GM12878 (cell line): ENCODE measurements at regions of chr2 and their contacts with region 1.

Region 1: DNA sequence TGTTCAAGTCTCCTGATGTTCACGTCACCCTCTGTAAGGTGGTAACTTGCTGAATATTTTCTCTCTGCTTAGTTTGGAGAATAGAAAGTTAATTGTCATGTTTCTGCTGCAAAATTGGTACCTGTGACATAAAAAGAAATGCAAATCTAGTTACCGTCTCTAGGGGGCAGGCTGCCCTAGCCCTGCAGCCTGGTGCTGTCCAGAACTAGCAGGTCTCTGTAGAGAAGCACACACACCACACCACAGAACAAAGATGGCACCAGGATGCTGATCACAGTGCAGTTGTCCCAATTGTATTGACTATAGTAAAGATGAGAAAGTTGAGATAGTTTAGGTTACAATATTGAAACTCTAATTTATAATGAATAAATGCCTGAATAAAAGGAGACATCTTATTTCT is 47.0 kb downstream of the SLC9A4 start:
- DNase-seq: no peak
- ATAC-seq: peak; percentile 88
- H3K4me3 ChIP-seq: no peak overlapping the region
- H3K27ac ChIP-seq: no peak overlapping the region
- H3K4me1 ChIP-seq: no peaks in the 10 kb centered on the region; the same call in 1 of the 2 replicates
- H3K27me3 ChIP-seq: peaks cover 0 to under 1% of the 10 kb centered on the region in 2 experiments; a peak in 1 of 4 replicates
- CTCF ChIP-seq: peak; percentile 68 to 73 (median 72)
- EP300 ChIP-seq: no peak
- POLR2A ChIP-seq: no peak
- RAD21 ChIP-seq: peak; percentile 71

Region 2: GRCh38 chr2:102376052-102376591 is 143.9 kb before region 1 on chr2:
- CTCF ChIA-PET with region 1: no interaction called
- POLR2A ChIA-PET with region 1: no interaction called
- RAD21 ChIA-PET with region 1: no interaction called
- SMC1A ChIA-PET with region 1: no interaction called
- in situ Hi-C with region 1: no loop called
- intact Hi-C with region 1: no loop called
- DNase-seq: no peak
- ATAC-seq: no peak
- H3K4me3 ChIP-seq: no peak overlapping the region
- H3K27ac ChIP-seq: no peak overlapping the region
- H3K4me1 ChIP-seq: no peaks in the 10 kb centered on the region
- H3K27me3 ChIP-seq: no peaks in the 10 kb centered on the region
- CTCF ChIP-seq: no peak
- EP300 ChIP-seq: no peak
- POLR2A ChIP-seq: no peak
- RAD21 ChIP-seq: no peak

Region 3: DNA sequence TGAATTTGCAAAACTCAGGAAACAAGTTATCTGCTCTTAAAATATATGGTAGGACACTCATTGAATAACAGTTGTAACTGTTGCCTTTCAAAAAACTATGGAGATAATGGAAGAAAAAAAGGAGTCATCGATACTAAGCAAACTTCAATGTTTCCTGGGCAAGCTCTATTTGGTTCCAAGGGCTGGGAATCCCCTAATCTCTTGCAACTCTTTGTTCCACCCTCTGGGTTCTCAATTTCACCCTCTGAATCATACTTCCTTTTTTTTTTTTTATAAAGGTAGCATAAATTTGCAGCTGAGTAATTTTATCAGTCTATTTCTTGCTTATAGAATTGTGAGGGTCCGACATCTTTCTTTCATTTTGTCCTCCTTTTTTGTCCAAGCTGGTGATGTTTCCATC is 10.3 kb before region 1 on chr2:
- CTCF ChIA-PET with region 1: interaction called, 11 read pairs
- POLR2A ChIA-PET with region 1: no interaction called
- RAD21 ChIA-PET with region 1: no interaction called
- SMC1A ChIA-PET with region 1: interaction called, 3 read pairs
- in situ Hi-C with region 1: no loop called
- intact Hi-C with region 1: no loop called
- DNase-seq: no peak
- ATAC-seq: peak; percentile 69
- H3K4me3 ChIP-seq: peak overlapping the region; percentile 40; the same call in 1 of the 2 replicates
- H3K27ac ChIP-seq: no peak overlapping the region
- H3K4me1 ChIP-seq: no peaks in the 10 kb centered on the region
- H3K27me3 ChIP-seq: no peaks in the 10 kb centered on the region; a peak in 1 of 4 replicates
- CTCF ChIP-seq: no peak
- EP300 ChIP-seq: no peak
- POLR2A ChIP-seq: no peak
- RAD21 ChIP-seq: no peak

Region 4: GRCh38 chr2:102703748-102704147 is 183.7 kb after region 1 on chr2:
- CTCF ChIA-PET with region 1: interaction called, 12 read pairs
- POLR2A ChIA-PET with region 1: no interaction called
- RAD21 ChIA-PET with region 1: interaction called, 7 read pairs
- SMC1A ChIA-PET with region 1: interaction called, 3 read pairs
- in situ Hi-C with region 1: no loop called
- intact Hi-C with region 1: loop called (anchors 1 kb)
- DNase-seq: no peak
- ATAC-seq: peak; percentile 77
- H3K4me3 ChIP-seq: no peak overlapping the region
- H3K27ac ChIP-seq: no peak overlapping the region
- H3K4me1 ChIP-seq: no peaks in the 10 kb centered on the region
- H3K27me3 ChIP-seq: no peaks in the 10 kb centered on the region
- CTCF ChIP-seq: peak; percentile 20 to 53 (median 30); a peak in 3 of 6 replicates
- EP300 ChIP-seq: no peak
- POLR2A ChIP-seq: no peak
- RAD21 ChIP-seq: peak; percentile 59

Region 5: GRCh38 chr2:102806250-102806837 is 286.3 kb after region 1 on chr2:
- CTCF ChIA-PET with region 1: interaction called, 3 read pairs
- POLR2A ChIA-PET with region 1: no interaction called
- RAD21 ChIA-PET with region 1: no interaction called
- SMC1A ChIA-PET with region 1: interaction called, 3 read pairs
- in situ Hi-C with region 1: no loop called
- intact Hi-C with region 1: loop called (anchors 2 kb)
- DNase-seq: no peak
- ATAC-seq: peak; percentile 83
- H3K4me3 ChIP-seq: no peak overlapping the region
- H3K27ac ChIP-seq: no peak overlapping the region
- H3K4me1 ChIP-seq: peaks cover 3% of the 10 kb centered on the region
- H3K27me3 ChIP-seq: no peaks in the 10 kb centered on the region
- CTCF ChIP-seq: peak; percentile 85 to 90 (median 86)
- EP300 ChIP-seq: no peak
- POLR2A ChIP-seq: no peak
- RAD21 ChIP-seq: peak; percentile 77